RWPE1 (cell line): ENCODE measurements at regions of chr16 and their contacts with region 1.

Region 1: GRCh38 chr16:88685156-88686061 is 898 bp downstream of the SNAI3 start:
- DNase-seq: peak; percentile 64
- H3K27ac ChIP-seq: peak overlapping the region; percentile 11; the same call in 1 of the 2 replicates
- CTCF ChIP-seq: peak; percentile 61

Region 2: GRCh38 chr16:88497561-88498462 is 187.6 kb before region 1 on chr16:
- CTCF ChIA-PET with region 1: no interaction called
- POLR2A ChIA-PET with region 1: no interaction called
- DNase-seq: no peak
- H3K27ac ChIP-seq: no peak overlapping the region
- CTCF ChIP-seq: no peak

Region 3: DNA sequence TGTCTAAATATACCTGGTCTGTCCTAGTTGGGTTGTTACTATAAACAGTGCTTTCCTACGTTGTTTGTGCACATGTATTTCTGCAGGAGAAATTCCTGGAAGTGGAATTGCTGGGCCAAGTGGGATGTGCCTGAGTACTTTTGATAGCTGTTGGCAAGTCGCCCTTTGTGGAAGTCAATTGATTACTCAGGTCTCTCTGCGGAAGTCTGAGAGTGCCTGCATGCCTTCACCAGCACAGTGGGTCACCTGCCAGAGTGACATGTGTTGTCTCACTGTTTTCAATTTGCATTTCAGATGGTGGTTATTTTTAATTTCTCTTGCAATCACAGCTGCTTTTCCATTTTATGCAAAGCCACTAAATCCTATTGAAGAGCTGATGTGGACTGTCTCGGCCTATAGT is 20.3 kb before region 1 on chr16:
- CTCF ChIA-PET with region 1: interaction called, 12 read pairs
- POLR2A ChIA-PET with region 1: interaction called, 3 read pairs
- DNase-seq: no peak
- H3K27ac ChIP-seq: no peak overlapping the region
- CTCF ChIP-seq: no peak

Region 4: GRCh38 chr16:88790312-88791211 is 105.2 kb after region 1 on chr16:
- CTCF ChIA-PET with region 1: no interaction called
- POLR2A ChIA-PET with region 1: no interaction called
- DNase-seq: no peak
- H3K27ac ChIP-seq: no peak overlapping the region
- CTCF ChIP-seq: no peak

Region 5: DNA sequence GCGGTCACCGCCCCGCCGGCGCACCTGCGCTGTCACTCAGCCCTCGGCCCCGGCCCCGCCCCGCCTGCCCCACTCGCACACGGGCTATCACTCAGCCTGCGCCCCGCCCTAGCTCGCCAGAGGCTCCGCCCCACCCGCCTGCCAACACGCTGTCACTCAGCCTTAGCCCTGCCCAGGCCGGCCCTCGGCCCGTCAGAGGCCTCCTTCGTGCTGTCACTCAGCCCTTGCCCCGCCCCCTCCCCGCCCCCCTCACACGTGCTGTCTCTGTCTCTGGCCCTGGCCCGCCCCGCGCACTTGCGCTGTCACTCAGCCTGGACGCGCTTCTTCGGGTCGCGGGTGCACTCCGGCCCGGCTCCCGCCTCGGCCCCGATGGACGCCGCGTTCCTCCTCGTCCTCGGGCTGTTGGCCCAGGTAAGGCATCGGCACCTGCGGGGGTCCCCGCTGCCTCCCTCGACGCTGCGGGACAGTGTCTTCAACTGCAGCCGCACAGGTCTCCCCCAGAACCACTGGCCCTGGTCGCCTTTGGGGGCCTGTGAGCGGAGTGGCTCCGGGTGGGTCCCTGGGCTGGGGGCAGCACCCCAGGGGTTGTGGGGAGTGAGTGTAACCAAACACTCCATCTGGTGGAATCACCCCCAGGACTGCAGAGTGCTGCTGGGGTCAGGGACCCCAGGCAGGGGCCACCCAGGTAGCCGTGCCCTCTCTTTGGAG is 486.2 kb after region 1 on chr16 and contains the start of gene CDH15:
- CTCF ChIA-PET with region 1: no interaction called
- POLR2A ChIA-PET with region 1: no interaction called
- DNase-seq: peak; percentile 98
- H3K27ac ChIP-seq: no peak within 1 kb of the TSS
- CTCF ChIP-seq: no peak